Caco-2 (cell line): ENCODE measurements at regions of chr3 and their contacts with region 1.

Region 1: DNA sequence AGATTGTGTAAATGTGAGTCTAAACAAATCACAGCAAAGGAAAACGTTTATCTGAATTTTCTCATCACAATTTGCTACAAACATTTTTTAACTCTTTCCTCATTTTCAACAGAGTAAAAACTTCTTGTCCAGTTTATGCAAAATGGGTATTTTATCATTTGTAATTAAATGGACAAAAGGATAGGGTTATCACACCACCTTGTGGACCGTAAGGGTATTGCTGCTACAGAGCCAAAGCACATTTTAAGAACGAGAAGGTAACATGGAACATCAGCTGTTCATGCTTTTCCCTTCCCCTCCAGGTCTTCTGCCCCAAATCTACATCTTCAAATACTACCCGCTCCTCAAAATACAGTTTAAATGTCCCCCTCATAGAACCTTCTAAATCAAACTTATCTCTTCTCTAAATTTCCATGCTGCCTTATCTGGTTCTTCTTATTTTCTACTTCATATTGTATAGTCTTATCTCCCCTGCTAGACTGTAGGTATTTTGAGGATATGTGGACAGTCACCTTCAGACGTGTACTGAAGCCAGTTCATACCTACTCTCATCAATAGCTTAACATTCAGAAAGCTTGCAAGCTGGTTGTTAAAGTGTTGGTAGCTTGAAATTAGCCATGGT is 12.8 kb upstream of the SETMAR start:
- DNase-seq: peak in 1 of 2 experiments; percentile 31
- H3K4me3 ChIP-seq: no peak overlapping the region
- H3K4me3 Mint-ChIP-seq: no peak overlapping the region
- H3K27ac Mint-ChIP-seq: no peak overlapping the region
- H3K4me1 ChIP-seq: no peaks in the 10 kb centered on the region
- H3K4me1 Mint-ChIP-seq: no peaks in the 10 kb centered on the region
- H3K27me3 ChIP-seq: no peaks in the 10 kb centered on the region
- H3K27me3 Mint-ChIP-seq: peaks cover 4% of the 10 kb centered on the region
- CTCF ChIP-seq: peak; percentile 72 to 81

Region 2: DNA sequence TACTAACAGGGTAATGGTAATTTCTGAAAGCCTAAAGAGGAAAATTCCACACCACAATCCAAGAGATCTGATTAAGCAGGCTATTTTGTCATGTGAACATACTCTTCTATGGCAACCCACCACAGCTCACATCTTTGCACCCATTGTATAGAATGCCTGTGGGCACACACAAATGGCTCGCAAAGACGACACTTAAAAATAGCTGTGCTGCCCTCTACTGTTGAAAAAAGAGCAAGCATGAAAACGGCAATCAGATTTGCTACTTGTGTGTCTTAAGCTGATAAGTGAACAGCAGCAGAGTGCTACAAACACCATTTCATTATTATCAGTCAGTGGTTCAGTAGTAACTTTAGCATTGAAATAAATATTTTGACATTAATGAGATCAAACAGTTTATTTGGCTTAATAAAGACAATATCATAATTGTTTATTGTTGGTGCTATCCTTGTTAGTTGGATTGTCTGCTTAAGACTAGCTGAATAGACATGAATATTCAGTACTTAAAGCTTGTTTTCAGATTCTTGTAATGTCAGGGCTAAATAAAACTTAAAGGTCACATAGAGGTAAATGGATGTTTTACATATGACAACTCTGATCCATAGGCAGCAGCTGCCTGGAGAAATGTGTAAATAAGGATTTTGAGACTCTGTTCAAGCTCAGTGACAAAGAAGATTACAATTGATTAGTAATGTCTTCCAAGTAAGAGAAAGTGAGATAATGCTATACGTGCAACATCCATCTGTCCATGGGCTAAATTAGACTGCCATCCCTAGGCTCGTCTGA is 292.1 kb before region 1 on chr3:
- CTCF ChIA-PET with region 1: no interaction called
- POLR2A ChIA-PET with region 1: no interaction called
- intact Hi-C with region 1: loop called (anchors 1 kb)
- DNase-seq: peak; percentile 38 to 44
- H3K4me3 ChIP-seq: no peak overlapping the region
- H3K4me3 Mint-ChIP-seq: no peak overlapping the region
- H3K27ac Mint-ChIP-seq: no peak overlapping the region
- H3K4me1 ChIP-seq: no peaks in the 10 kb centered on the region
- H3K4me1 Mint-ChIP-seq: peaks cover 8% of the 10 kb centered on the region
- H3K27me3 ChIP-seq: no peaks in the 10 kb centered on the region
- H3K27me3 Mint-ChIP-seq: no peaks in the 10 kb centered on the region
- CTCF ChIP-seq: peak; percentile 40 to 60

Region 3: GRCh38 chr3:4376499-4376898 is 86.1 kb after region 1 on chr3:
- CTCF ChIA-PET with region 1: no interaction called
- POLR2A ChIA-PET with region 1: no interaction called
- intact Hi-C with region 1: no loop called
- DNase-seq: no peak
- H3K4me3 ChIP-seq: no peak overlapping the region
- H3K4me3 Mint-ChIP-seq: no peak overlapping the region
- H3K27ac Mint-ChIP-seq: no peak overlapping the region
- H3K4me1 ChIP-seq: no peaks in the 10 kb centered on the region
- H3K4me1 Mint-ChIP-seq: no peaks in the 10 kb centered on the region
- H3K27me3 ChIP-seq: no peaks in the 10 kb centered on the region
- H3K27me3 Mint-ChIP-seq: no peaks in the 10 kb centered on the region
- CTCF ChIP-seq: no peak

Region 4: GRCh38 chr3:4478261-4478660 is 187.9 kb after region 1 on chr3:
- CTCF ChIA-PET with region 1: no interaction called
- POLR2A ChIA-PET with region 1: no interaction called
- intact Hi-C with region 1: no loop called
- DNase-seq: no peak
- H3K4me3 ChIP-seq: no peak overlapping the region
- H3K4me3 Mint-ChIP-seq: no peak overlapping the region
- H3K27ac Mint-ChIP-seq: no peak overlapping the region
- H3K4me1 ChIP-seq: no peaks in the 10 kb centered on the region
- H3K4me1 Mint-ChIP-seq: no peaks in the 10 kb centered on the region
- H3K27me3 ChIP-seq: no peaks in the 10 kb centered on the region
- H3K27me3 Mint-ChIP-seq: peaks cover 9% of the 10 kb centered on the region
- CTCF ChIP-seq: no peak